B cell (primary cell): ENCODE measurements at regions of chr3 and their contacts with region 1.

Region 1: DNA sequence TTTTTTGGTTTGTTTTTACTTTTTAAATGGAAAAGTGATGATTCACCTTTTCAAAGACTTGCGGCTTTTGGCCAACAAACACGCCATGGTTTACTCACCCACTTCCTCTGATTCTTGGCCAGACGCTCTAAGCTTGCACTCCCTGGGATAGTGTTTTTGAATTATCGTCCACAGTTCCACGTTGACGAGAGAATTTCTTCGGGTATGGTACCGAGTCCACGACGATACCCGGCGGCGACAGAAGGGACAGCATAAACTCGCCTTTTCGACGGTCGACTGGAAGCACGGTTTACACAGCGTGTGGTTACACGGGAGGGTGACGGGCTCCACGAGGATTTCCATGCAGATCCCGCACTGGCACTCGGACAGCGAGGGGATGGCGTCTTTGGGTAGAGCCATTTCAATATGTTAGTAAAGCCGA is 783 bp downstream of the RNF168 start:
- DNase-seq: peak; percentile 67
- ATAC-seq: peak; percentile 5
- H3K4me3 ChIP-seq: peak overlapping the region; percentile 79 to 87 (median 82)
- H3K4me3 Mint-ChIP-seq: peak overlapping the region; percentile 100
- H3K27ac ChIP-seq: peak overlapping the region; percentile 74 to 83
- H3K27ac Mint-ChIP-seq: peak overlapping the region; percentile 92
- H3K4me1 ChIP-seq: peaks cover 16 to 28% of the 10 kb centered on the region in 2 donors
- H3K4me1 Mint-ChIP-seq: peaks cover 38% of the 10 kb centered on the region
- H3K27me3 ChIP-seq: no peaks in the 10 kb centered on the region
- H3K27me3 Mint-ChIP-seq: no peaks in the 10 kb centered on the region
- CTCF ChIP-seq: no peak

Region 2: GRCh38 chr3:196317687-196318467 is 184.9 kb before region 1 on chr3 and contains the start of gene DYNLT2B:
- CTCF ChIA-PET with region 1: no interaction called
- POLR2A ChIA-PET with region 1: interaction called, 3 read pairs
- intact Hi-C with region 1: loop called (anchors 2 kb)
- DNase-seq: peak; percentile 93
- ATAC-seq: peak; percentile 91
- H3K4me3 ChIP-seq: peak within 1 kb of the TSS; percentile 44 to 85 (median 76)
- H3K4me3 Mint-ChIP-seq: peak within 1 kb of the TSS; percentile 96
- H3K27ac ChIP-seq: peak within 1 kb of the TSS; percentile 85 to 89
- H3K27ac Mint-ChIP-seq: peak within 1 kb of the TSS; percentile 97
- H3K4me1 ChIP-seq: peaks cover 0 to 10% of the 10 kb centered on the region in 2 donors
- H3K4me1 Mint-ChIP-seq: peaks cover 10% of the 10 kb centered on the region
- H3K27me3 ChIP-seq: no peaks in the 10 kb centered on the region
- H3K27me3 Mint-ChIP-seq: no peaks in the 10 kb centered on the region
- CTCF ChIP-seq: no peak
- total RNA-seq, gene DYNLT2B: 5.6 and 6.5 TPM in 2 replicates

Region 3: DNA sequence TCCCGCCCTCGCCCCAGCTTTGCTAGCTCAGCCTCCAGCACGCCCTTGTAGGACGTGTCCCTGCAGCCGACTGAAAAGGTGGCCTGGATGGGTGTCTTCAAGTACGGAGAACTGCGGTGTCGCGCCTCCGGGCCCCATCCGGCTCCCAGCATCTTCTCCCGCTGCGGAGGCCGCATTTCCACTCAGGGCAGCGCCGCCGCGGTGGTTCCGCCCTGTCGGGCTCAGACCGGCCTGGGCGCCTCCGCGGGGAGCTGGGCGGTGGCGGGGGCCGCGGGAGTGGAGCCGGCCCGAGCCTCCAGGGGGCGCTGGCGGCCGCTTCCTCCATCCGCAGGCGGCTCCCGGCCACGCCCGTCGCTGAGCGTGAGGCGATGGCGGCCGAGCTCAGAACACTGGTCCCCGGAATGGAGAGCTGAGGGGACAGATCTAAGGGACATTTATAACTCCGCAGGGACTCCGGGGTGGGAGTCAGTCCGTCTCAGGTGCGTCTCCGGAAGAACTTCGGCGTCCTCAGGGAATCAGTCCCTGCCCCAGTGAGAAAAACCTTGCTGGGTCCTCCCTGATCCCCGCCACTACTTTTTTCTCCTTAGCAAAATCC is 26.0 kb after region 1 on chr3:
- CTCF ChIA-PET with region 1: interaction called, 5 read pairs
- POLR2A ChIA-PET with region 1: interaction called, 4 read pairs
- intact Hi-C with region 1: loop called (anchors 2 kb)
- DNase-seq: peak; percentile 83
- ATAC-seq: peak; percentile 98
- H3K4me3 ChIP-seq: peak overlapping the region; percentile 38 to 60 (median 38)
- H3K4me3 Mint-ChIP-seq: peak overlapping the region; percentile 84
- H3K27ac ChIP-seq: no peak overlapping the region
- H3K27ac Mint-ChIP-seq: peak overlapping the region; percentile 73
- H3K4me1 ChIP-seq: peaks cover 6 to 8% of the 10 kb centered on the region in 2 donors
- H3K4me1 Mint-ChIP-seq: peaks cover 7% of the 10 kb centered on the region
- H3K27me3 ChIP-seq: peaks cover 0 to 2% (median 0%) of the 10 kb centered on the region in 4 experiments
- H3K27me3 Mint-ChIP-seq: peaks cover 3% of the 10 kb centered on the region
- CTCF ChIP-seq: peak; percentile 82

Region 4: GRCh38 chr3:196620161-196620604 is 117.4 kb after region 1 on chr3:
- CTCF ChIA-PET with region 1: no interaction called
- POLR2A ChIA-PET with region 1: no interaction called
- intact Hi-C with region 1: no loop called
- DNase-seq: no peak
- ATAC-seq: no peak
- H3K4me3 ChIP-seq: no peak overlapping the region
- H3K4me3 Mint-ChIP-seq: no peak overlapping the region
- H3K27ac ChIP-seq: no peak overlapping the region
- H3K27ac Mint-ChIP-seq: no peak overlapping the region
- H3K4me1 ChIP-seq: peaks cover 11 to 19% of the 10 kb centered on the region in 2 donors
- H3K4me1 Mint-ChIP-seq: peaks cover 15% of the 10 kb centered on the region
- H3K27me3 ChIP-seq: no peaks in the 10 kb centered on the region
- H3K27me3 Mint-ChIP-seq: no peaks in the 10 kb centered on the region
- CTCF ChIP-seq: no peak

Region 5: DNA sequence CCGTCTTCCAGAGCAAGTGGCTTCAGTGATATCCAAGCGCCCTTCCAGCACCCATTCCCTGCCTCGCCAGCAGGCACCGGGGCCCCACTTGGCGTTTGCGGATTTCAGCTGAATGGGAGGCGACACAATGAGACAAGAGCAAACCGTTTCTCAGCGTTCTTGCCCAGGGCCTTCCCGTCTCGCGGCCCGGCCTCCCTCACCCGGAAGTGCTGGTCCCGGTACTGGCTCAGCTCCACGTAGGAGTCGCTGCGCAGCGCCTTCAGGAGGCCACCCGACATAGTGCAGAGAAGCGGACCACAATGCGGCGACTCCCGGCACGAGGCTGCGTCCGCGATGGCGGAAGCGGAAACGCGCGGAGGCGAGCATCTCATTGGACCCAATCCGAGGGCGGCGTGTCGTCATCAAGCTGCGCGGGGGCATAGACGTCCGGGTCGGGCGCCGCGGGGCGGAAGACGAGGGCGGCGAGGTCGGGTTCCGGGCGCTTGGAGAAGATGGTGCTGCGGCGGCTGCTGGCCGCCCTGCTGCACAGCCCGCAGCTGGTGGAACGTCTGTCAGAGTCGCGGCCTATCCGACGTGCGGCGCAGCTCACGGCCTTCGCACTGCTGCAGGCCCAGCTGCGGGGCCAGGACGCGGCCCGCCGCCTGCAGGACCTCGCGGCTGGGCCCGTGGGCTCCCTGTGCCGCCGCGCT is 439.6 kb after region 1 on chr3 and contains the start of gene NCBP2:
- CTCF ChIA-PET with region 1: no interaction called
- POLR2A ChIA-PET with region 1: no interaction called
- intact Hi-C with region 1: loop called (anchors 1 kb)
- DNase-seq: peak; percentile 99
- ATAC-seq: peak; percentile 91
- H3K4me3 ChIP-seq: peak within 1 kb of the TSS; percentile 83 to 99 (median 92)
- H3K4me3 Mint-ChIP-seq: peak within 1 kb of the TSS; percentile 98
- H3K27ac ChIP-seq: peak within 1 kb of the TSS; percentile 92 to 97
- H3K27ac Mint-ChIP-seq: peak within 1 kb of the TSS; percentile 99
- H3K4me1 ChIP-seq: peaks cover 29 to 35% of the 10 kb centered on the region in 2 donors
- H3K4me1 Mint-ChIP-seq: peaks cover 50% of the 10 kb centered on the region
- H3K27me3 ChIP-seq: no peaks in the 10 kb centered on the region
- H3K27me3 Mint-ChIP-seq: no peaks in the 10 kb centered on the region
- CTCF ChIP-seq: peak; percentile 77
- total RNA-seq, gene NCBP2: 93.4 and 95.0 TPM in 2 replicates